ENCODE measurements at regions of chr10 and their contacts with region 1.

Region 1: DNA sequence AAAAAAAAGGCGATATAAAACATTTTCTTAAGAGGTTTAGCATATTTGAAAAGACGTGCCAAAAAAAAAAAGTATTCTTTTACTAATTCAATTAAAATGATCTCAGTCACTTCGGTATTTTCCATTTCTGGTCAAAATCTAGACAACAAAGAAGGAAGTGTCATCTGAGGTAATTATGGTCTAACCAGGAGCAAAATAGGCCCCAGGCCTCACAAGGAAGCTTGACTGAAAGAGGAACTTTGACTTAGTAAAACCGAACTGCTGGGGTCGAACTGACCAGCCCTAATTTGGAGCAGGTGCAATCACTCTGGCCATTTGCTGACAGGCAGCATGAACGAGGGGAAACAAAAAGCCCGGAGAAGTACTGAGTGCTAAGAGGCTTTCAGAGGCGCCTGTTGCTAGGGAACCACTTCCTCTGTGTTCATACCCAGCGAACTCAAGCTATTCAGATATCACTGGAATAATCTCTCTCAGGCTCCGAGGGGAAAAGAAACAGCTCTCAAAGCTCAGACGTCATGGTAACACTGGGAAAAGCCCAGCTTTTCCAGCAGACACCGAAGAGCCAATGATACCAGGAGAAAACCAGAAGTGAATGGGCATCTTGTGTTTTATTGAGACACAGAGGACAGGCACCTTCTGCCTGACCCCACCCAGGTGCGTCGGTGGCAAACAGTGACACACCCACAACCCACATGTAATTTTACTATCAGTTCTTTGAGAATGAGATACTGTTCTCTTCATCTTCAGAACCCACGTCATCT is 126.5 kb downstream of the FAM107B start:
- DNase-seq: peak; percentile 69 to 85 (median 80)
- ATAC-seq: peak; percentile 91 to 99 (median 98)
- H3K4me3 ChIP-seq: peak overlapping the region in 5 of 12 donors; percentile 19 to 33 (median 30)
- H3K27ac ChIP-seq: peak overlapping the region; percentile 33 to 95 (median 76)
- H3K4me1 ChIP-seq: peaks cover 0 to 29% (median 16%) of the 10 kb centered on the region in 12 donors
- H3K27me3 ChIP-seq: no peaks in the 10 kb centered on the region
- CTCF ChIP-seq: no peak
- POLR2A ChIP-seq: no peak

Region 2: GRCh38 chr10:14736600-14737081 is 88.5 kb after region 1 on chr10:
- intact Hi-C with region 1: loop called in 1 of 10 experiments (anchors 10 kb)
- DNase-seq: peak in 4 of 5 donors; percentile 38 to 55 (median 48)
- ATAC-seq: peak; percentile 69 to 80 (median 73)
- H3K4me3 ChIP-seq: no peak overlapping the region
- H3K27ac ChIP-seq: peak overlapping the region; percentile 23 to 91 (median 66)
- H3K4me1 ChIP-seq: peaks cover 0 to 46% (median 20%) of the 10 kb centered on the region in 12 donors
- H3K27me3 ChIP-seq: no peaks in the 10 kb centered on the region
- CTCF ChIP-seq: peak in 1 of 12 donors; percentile 31
- POLR2A ChIP-seq: no peak

Measured in heart left ventricle (tissue), 16 donors.